Panc1 (cell line): ENCODE measurements at regions of chr5 and their contacts with region 1.

Region 1: GRCh38 chr5:88695931-88696330 is 187.1 kb downstream of the MEF2C start:
- DNase-seq: no peak
- ATAC-seq: no peak
- H3K4me3 ChIP-seq: no peak overlapping the region
- H3K27ac ChIP-seq: no peak overlapping the region
- H3K4me1 ChIP-seq: 0 out of 2 replicates have a peak, but pooled peaks cover 7% of the 10 kb centered on the region
- H3K27me3 ChIP-seq: peaks cover 11% of the 10 kb centered on the region
- CTCF ChIP-seq: no peak

Region 2: DNA sequence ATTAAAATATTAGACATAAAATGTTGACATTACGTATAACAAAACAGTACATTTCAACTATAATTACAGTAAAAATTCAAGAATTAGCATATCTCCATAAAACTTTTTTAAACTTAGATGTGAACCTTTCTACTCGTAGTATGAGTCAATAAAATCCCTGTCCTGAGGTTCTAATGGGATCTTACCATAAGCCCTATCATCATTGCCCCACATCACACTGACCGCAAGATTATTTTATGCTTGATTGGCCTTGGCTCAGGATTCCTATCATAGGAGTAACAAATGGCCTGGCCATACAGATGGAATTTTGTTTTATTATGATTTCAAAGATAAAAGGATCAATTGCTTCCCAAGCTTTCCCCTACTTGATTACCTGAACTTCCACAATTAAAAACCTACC is 51.3 kb before region 1 on chr5:
- CTCF ChIA-PET with region 1: no interaction called
- POLR2A ChIA-PET with region 1: no interaction called
- in situ Hi-C with region 1: no loop called
- intact Hi-C with region 1: no loop called
- DNase-seq: no peak
- ATAC-seq: no peak
- H3K4me3 ChIP-seq: no peak overlapping the region
- H3K27ac ChIP-seq: no peak overlapping the region
- H3K4me1 ChIP-seq: no peaks in the 10 kb centered on the region
- H3K27me3 ChIP-seq: no peaks in the 10 kb centered on the region
- CTCF ChIP-seq: no peak

Region 3: DNA sequence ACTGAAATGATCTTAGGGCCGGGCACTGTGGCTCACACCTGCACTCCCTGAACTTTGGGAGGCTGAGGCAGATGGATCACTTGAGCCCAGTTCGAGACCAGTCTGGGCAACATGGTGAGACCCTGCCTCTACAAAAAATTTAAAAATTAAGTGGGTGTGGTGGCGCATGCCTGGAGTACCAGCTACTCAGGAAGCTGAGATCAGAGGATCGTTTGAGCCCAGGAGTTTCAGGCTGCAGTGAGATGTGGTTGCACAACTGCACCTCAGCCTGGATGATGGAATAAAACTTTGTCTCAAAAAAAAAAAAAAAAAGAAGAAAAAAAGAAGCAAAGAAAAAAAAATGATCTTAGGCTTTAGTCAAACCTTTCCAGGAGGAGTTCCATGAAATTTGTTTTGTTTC is 145.3 kb after region 1 on chr5:
- CTCF ChIA-PET with region 1: interaction called, 10 read pairs
- POLR2A ChIA-PET with region 1: no interaction called
- in situ Hi-C with region 1: no loop called
- intact Hi-C with region 1: no loop called
- DNase-seq: no peak
- ATAC-seq: no peak
- H3K4me3 ChIP-seq: no peak overlapping the region
- H3K27ac ChIP-seq: no peak overlapping the region
- H3K4me1 ChIP-seq: peaks cover 8% of the 10 kb centered on the region; the same call in 1 of the 2 replicates
- H3K27me3 ChIP-seq: no peaks in the 10 kb centered on the region
- CTCF ChIP-seq: no peak